Right ventricle myocardium superior (tissue), 1 donor: ENCODE measurements at regions of chr17 and their contacts with region 1.

Region 1: DNA sequence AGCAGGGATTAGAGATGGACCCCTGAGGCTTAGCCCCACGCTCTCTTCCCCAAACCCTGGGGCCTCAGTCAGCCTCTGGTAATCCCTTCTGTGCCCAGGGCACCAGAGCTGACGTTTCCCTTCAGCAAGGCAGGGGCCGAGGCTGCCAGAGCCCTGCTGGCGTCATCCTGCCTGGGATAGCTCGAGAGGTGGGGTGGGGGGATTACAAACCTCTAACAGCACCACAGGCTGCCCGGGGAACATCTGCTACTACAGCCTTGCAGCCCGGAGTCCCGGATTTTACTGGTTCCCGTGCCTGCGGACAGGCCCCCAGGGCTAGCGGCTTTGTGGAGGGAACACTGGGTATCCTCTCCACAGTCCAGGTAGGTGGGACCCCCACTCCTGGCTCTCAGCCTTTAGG is at the start of gene AANAT:
- DNase-seq: peak; percentile 31
- ATAC-seq: no peak
- total RNA-seq, gene AANAT: not detected

Region 2: GRCh38 chr17:76623271-76624146 is 156.1 kb after region 1 on chr17:
- intact Hi-C with region 1: loop called (anchors 10 kb)
- DNase-seq: peak; percentile 85
- ATAC-seq: peak; percentile 97